Activated T-helper 1 cell treated with anti-CD3 and anti-CD28 coated beads, Interleukin-12 subunit alpha, Interleukin-12 subunit beta, Interleukin-2, Interleukin-4 antibody, amounts not matched to agents 30 ng/mL and 10 ng/mL and 1 ng/mL, durations not matched to agents 14 hours and 24 hours and 36 hours (primary cell): ENCODE measurements at regions of chr11 and their contacts with region 1.

Region 1: GRCh38 chr11:44893846-44894617 is 56.7 kb downstream of the TP53I11 start:
- DNase-seq: peak; percentile 21
- H3K4me3 Mint-ChIP-seq: no peak overlapping the region
- H3K27ac Mint-ChIP-seq: no peak overlapping the region
- H3K4me1 Mint-ChIP-seq: no peaks in the 10 kb centered on the region
- H3K27me3 Mint-ChIP-seq: no peaks in the 10 kb centered on the region

Region 2: DNA sequence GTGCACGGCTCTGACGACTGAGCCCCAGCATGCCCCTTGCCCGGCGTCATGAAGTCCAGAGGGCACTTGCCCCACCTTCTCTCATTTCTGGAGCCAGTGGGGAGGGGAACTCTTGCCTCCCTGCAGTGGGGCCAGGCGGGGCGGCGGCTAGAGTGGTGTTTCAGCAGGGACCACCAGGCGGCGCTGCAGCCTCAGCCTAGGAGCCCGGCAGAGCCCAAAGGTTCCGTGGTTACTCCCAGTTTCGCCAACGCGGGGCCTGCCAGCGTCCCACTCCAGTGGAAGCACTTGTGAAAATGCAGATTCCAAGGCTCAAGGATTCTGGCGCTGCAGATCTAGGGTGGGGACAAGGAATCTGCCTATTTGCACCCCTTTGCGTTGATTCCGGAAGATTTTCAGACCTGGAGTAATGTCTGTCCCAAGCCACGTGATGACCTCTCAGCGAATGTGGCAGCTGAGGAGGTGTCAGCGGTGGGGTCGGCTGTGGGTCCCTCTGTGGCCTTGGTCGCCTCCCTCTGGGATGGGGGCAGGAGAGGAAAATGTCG is 272.8 kb before region 1 on chr11:
- intact Hi-C with region 1: loop called (anchors 1 kb)
- DNase-seq: peak; percentile 35
- H3K4me3 Mint-ChIP-seq: no peak overlapping the region
- H3K27ac Mint-ChIP-seq: no peak overlapping the region
- H3K4me1 Mint-ChIP-seq: peaks cover 36% of the 10 kb centered on the region
- H3K27me3 Mint-ChIP-seq: no peaks in the 10 kb centered on the region

Region 3: GRCh38 chr11:44936525-44936924 is 42.5 kb after region 1 on chr11:
- intact Hi-C with region 1: no loop called
- DNase-seq: peak; percentile 70
- H3K4me3 Mint-ChIP-seq: no peak overlapping the region
- H3K27ac Mint-ChIP-seq: no peak overlapping the region
- H3K4me1 Mint-ChIP-seq: no peaks in the 10 kb centered on the region
- H3K27me3 Mint-ChIP-seq: peaks cover 5% of the 10 kb centered on the region